ENCODE measurements at regions of chr18 and their contacts with region 1.

Region 1: DNA sequence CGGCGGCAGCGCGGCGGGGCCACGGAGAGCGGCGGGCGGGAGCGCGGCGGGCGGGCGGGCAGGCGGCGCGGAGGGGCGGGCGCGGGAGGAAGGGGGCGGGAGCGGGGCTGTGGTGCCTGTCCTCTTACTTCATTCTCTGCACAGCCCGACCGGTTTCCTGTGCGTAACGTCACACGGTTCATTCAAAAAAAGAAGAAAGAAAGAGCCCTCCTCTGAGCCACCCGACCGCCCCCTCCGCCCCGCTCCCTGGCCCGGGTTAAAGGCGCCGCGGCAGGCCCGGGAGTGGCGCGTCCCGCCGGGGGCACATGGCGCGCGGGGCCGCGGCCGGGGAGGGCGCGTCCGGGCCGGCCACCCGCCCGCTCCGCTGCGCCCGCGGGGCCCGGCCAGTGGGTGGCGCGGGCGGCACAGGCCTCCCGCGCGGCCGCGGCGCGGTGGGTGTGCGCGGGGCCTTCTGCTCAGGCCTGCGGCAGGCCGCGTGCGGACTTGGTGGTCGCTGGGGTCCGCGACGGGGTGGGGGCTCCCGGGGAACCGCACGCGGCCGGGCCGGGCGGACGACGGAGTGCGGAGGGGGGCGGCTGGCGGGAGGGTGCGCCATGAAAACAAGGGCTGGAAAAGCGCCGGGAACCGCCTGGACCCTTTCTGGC is 599 bp upstream of the BCL2 start:
- DNase-seq: peak; percentile 90
- CTCF ChIP-seq: peak; percentile 24

Region 2: DNA sequence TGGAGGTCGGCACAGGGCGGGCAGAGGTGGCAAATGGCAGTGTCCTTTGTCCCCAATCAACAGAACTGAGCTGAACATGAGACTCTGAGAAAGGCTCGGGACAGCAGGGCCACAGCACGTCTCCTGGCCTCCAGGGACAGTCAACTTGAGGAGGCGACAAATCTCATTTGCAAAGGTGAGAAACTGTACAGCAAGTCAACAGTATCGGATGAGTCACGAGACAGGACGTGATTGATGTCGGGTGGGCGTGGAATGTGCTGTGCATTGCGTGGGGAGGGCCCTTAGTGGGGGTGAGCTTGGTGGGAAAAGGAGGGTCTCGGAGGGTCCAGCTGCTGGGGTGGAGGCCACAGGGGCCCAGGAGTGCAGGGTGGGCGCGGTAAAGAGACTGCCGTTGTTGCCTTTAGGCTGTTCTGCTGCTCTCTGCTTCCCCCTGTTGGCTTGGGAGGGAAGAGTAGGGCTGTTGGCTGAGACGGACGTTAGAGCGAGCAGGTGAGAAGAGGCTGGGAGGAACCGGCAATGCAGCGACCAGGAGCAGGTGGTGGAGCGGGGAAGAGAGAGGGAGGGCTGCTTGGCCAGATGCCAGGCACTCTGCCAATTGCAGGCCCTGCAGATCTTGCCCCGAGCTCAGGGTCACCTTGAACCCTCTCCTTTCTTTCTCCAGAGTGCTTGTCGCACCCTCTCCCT is 164.9 kb before region 1 on chr18:
- in situ Hi-C with region 1: loop called (anchors 5 kb)
- DNase-seq: peak; percentile 68
- CTCF ChIP-seq: peak; percentile 86

Region 3: DNA sequence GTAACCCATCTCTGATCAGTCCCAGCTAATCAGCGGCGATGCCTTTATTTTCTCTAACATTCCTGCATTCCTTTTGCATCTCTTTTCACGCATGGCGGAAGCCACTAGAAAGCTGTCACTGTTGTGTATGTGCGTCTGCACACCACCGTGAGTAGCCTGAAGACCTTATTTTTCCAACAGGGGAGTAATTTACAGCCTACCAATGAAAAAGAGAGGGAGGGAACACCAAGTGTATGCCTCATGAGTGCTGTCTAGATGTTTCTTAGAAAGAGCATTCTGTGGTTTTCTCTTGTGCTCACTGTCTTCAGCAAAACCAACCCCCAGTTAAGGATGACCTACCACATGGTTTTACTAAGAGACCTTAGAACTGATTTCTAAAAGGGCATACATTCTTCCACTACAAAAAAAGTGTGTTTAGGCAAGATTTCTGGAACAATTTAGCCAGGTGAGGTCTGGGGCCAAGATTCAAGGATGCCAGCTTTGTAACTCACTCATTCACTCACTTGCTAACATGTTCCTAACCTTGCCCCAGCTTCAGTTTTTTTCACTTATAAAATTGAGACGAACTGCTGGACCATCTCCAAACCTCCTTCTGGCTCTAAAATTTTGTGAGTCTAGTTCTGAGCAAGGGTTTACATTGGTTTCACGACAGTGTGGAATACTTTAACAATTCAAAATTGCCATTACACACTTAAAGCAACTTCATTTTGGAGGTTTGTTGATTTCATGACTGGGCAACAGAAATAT is 52.0 kb before region 1 on chr18:
- in situ Hi-C with region 1: no loop called
- DNase-seq: no peak
- CTCF ChIP-seq: no peak

Region 4: GRCh38 chr18:63808125-63808524 is 488.0 kb after region 1 on chr18:
- in situ Hi-C with region 1: no loop called
- DNase-seq: no peak
- CTCF ChIP-seq: no peak